G401 (cell line): ENCODE measurements at regions of chr3 and their contacts with region 1.

Region 1: DNA sequence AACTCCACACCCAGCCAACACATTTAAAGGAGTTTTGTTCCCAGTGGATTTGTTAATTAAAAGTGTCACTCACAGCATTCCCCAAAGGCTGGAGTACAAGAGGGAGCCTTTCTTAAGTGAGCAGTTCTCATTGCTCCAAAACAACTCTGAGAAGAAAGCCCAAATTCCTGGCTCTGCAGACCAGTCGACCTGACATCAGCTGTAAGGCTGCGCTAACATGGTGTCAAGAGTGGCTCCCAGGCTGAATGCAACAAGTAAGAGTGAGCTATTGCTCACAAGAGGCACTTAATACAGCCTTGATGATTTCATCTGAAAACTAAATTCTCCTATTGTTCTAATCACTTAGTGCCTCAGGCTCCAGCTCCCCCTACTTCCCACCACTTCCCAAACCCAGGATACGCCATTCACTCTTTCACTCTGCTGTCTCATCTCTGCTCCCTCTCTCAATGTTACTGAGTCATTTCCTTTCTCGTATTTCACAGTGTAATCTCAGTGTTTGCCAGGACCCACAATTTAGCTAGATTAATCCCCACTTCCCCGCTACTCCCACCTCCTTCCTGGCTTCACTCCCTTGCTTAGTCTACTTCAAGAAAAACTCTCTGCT is 81.8 kb downstream of the WWTR1 start:
- DNase-seq: no peak

Region 2: DNA sequence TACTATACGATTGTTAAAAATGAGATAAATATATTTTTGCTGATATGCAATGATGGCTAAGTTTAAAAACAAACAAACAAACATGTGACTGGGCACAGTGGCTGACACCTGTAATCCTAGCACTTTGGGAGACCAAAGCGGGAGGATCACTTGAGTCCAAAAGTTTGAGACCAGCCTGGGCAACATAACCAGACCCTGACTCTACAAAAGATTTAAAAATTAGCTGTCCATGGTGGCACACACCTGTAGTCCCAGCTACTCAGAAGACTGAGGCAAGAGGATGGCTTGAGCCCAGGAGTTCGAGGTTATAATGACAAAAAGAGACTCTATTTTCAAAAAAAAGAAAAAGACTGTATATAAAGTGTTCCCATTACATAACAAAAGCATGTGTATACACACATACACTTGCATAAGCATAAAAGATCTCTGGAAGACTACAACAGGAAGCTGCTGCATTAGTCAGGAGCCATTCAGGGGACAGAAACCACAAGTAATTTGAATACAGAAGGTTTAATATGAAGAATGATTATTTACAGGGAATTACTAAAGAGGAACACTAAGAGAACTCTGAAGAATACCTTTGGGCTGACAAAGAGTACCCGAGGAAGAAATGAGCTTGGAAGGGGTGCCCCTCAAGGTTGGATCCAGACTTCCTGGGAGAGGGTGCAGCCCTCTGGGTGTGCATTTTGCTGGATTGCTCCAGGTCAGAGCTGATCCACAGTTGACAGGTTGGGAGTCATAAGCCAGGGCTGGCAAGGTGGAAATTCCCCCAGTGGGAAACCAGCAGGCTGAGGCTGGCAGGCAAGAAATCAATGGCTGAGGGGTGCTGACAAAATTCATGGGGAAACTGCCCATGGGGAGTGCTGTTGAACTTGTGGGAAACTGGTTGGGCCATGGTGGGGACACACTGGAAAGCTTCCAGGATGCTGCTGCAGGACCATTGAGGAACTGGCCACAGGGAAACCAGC is 233.4 kb before region 1 on chr3:
- in situ Hi-C with region 1: no loop called
- DNase-seq: no peak

Region 3: DNA sequence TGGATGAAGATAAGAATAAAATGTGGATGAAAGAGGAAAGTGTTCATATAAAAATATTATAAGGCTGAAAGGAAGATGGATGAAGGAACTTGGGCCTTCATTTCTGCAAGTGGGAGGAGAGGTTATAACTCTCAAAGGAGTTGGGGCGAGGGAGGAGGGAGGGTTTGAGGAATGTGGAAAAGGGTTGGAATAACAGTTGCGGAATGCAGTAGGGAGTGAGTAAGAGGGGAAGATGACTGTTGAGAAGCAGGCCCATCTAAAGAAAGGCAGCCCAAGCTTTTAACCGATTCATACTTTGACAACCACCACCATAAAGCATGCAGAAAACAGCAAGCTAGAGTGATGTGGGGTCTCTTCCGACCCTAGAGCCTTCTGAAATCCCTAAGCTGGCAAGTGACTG is 109.9 kb before region 1 on chr3:
- in situ Hi-C with region 1: no loop called
- DNase-seq: no peak

Region 4: DNA sequence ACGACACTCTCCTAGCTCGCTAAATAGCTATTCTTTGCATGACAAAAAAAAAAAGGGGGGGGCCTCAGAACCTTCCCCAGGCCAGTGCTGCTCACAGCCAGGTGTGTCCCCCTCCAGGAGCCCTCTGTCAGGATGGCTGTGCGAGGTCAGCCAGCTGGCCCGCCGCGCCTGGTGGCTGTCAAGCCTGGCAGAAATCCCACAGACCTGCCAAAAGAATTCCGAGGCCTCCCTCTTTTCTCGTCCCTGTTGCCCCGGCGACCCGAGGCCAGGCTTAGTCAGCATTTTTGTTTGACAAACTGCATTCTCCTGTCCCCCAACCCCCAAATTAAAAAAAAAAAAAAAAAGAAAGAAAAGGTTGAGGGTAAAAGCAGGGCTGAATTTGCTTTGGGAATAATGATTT is 39.6 kb before region 1 on chr3:
- in situ Hi-C with region 1: no loop called
- DNase-seq: peak; percentile 59

Region 5: GRCh38 chr3:149618151-149619123 is 42.4 kb after region 1 on chr3:
- in situ Hi-C with region 1: loop called (anchors 5 kb)
- DNase-seq: peak; percentile 82

Region 6: GRCh38 chr3:149941186-149941585 is 365.1 kb after region 1 on chr3:
- in situ Hi-C with region 1: no loop called
- DNase-seq: no peak